ENCODE measurements at regions of chr13 and their contacts with region 1.

Region 1: DNA sequence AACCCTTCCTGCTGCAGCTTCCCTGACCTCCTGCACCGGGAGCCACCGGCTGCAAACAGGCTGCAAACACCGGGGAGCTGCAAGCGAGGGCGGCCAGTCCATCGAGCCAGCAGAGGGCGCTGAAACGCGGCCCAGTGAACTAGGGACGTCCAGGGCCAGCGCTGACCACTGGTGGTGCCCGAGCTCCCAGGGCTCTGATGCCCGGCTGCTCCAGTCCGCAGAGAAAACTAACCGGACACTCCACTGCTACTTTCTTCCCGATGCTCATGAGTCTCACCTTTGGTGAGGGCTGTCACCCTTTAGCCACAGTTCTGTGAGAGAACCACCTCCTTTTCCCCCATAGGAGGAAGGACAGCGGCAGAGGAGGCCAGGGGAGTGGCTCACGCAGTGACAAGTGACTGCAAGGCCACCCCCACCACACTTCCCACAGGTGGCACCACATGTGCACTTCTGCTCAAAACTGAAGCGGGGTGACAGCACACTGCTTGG is 82.8 kb upstream of the MTIF3 start:
- DNase-seq: peak; percentile 79 to 92 (median 86)
- ATAC-seq: peak; percentile 79 to 98 (median 98)
- H3K4me3 ChIP-seq: peak overlapping the region in 9 of 12 donors; percentile 14 to 48 (median 37)
- H3K27ac ChIP-seq: no peak overlapping the region
- H3K4me1 ChIP-seq: peaks cover 0 to 8% (median 0%) of the 10 kb centered on the region in 12 donors
- H3K27me3 ChIP-seq: no peaks in the 10 kb centered on the region
- CTCF ChIP-seq: peak; percentile 86 to 97 (median 94)
- POLR2A ChIP-seq: no peak

Region 2: DNA sequence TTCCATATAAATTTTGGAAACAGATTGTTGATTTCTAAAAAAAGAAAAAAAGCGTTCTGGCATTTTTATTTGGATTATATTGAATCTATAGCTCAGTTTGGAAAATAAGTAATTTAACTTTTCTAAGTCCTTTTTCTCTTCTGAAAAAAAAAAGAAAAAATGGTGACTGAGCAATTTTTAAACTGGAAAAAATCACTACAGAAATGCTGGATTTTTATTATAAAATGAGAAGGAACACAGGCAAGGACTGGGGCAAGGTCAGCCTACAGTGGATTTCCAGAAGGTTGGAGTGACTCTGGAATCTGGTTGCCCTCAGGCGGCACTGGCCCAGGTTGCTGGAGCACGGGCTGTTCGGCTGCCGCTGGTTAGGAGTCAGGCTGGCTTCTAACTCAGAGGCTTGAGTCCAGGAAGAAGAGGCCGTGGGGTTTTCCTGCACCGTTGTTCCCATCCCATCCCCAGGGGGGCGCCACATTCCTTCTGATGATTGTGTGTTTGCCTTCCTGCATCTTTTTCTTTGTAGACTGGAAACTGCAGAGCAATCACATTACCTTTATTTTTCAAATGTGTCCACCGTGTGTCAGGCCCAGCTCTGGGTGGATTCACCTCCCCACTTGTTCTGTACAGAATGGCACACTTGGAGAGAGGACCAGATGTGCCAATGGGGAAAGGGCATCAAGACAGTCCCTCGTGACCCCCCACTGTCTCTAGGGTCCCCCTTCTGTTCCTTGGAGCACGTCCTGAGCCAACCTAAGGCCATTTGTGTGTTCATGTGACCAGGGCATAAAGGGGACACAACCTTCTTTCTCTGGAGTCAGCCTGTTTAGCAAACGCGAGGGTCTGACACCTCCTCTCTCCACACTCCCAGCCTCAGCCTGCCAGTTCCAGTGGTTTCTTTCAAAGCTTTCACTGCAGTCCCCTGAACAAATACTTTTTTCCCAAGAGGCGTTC is 153.2 kb before region 1 on chr13:
- intact Hi-C with region 1: loop called in 8 of 10 experiments (anchors 5 to 10 kb)
- DNase-seq: peak in 3 of 5 donors; percentile 20 to 49 (median 41)
- ATAC-seq: peak in 3 of 4 donors; percentile 33 to 68 (median 34)
- H3K4me3 ChIP-seq: no peak overlapping the region
- H3K27ac ChIP-seq: no peak overlapping the region
- H3K4me1 ChIP-seq: peaks cover 0 to 5% (median 0%) of the 10 kb centered on the region in 12 donors
- H3K27me3 ChIP-seq: peaks cover 0 to 19% (median 0%) of the 10 kb centered on the region in 9 donors
- CTCF ChIP-seq: peak; percentile 22 to 63 (median 49)
- POLR2A ChIP-seq: no peak

Region 3: GRCh38 chr13:27415116-27415515 is 118.1 kb before region 1 on chr13:
- intact Hi-C with region 1: loop called in 1 of 10 experiments (anchors 10 kb)
- DNase-seq: no peak
- ATAC-seq: peak; percentile 62 to 86 (median 69)
- H3K4me3 ChIP-seq: no peak overlapping the region
- H3K27ac ChIP-seq: peak overlapping the region in 1 of 12 donors; percentile 11
- H3K4me1 ChIP-seq: peaks cover 0 to 15% (median 7%) of the 10 kb centered on the region in 12 donors
- H3K27me3 ChIP-seq: peaks cover 0 to 4% (median 0%) of the 10 kb centered on the region in 9 donors
- CTCF ChIP-seq: no peak
- POLR2A ChIP-seq: no peak

Region 4: GRCh38 chr13:27665333-27665732 is 132.1 kb after region 1 on chr13:
- intact Hi-C with region 1: loop called in 2 of 10 experiments (anchors 5 to 10 kb)
- DNase-seq: no peak
- ATAC-seq: no peak
- H3K4me3 ChIP-seq: no peak overlapping the region
- H3K27ac ChIP-seq: no peak overlapping the region
- H3K4me1 ChIP-seq: peaks cover 0 to 31% (median 6%) of the 10 kb centered on the region in 12 donors
- H3K27me3 ChIP-seq: no peaks in the 10 kb centered on the region
- CTCF ChIP-seq: peak in 10 of 12 donors; percentile 9 to 45 (median 23)
- POLR2A ChIP-seq: no peak

Region 5: GRCh38 chr13:27783111-27783510 is 249.9 kb after region 1 on chr13:
- intact Hi-C with region 1: loop called in 2 of 10 experiments (anchors 5 to 10 kb)
- DNase-seq: no peak
- ATAC-seq: peak in 3 of 4 donors; percentile 56 to 69 (median 65)
- H3K4me3 ChIP-seq: no peak overlapping the region
- H3K27ac ChIP-seq: no peak overlapping the region
- H3K4me1 ChIP-seq: no peaks in the 10 kb centered on the region
- H3K27me3 ChIP-seq: peaks cover under 1 to 82% (median 11%) of the 10 kb centered on the region in 9 donors
- CTCF ChIP-seq: peak in 10 of 12 donors; percentile 10 to 60 (median 38)
- POLR2A ChIP-seq: no peak

Region 6: GRCh38 chr13:27980280-27980998 is 447.2 kb after region 1 on chr13:
- intact Hi-C with region 1: loop called in 3 of 10 experiments (anchors 5 to 10 kb)
- DNase-seq: no peak
- ATAC-seq: no peak
- H3K4me3 ChIP-seq: no peak overlapping the region
- H3K27ac ChIP-seq: no peak overlapping the region
- H3K4me1 ChIP-seq: peaks cover 0 to 37% (median 11%) of the 10 kb centered on the region in 12 donors
- H3K27me3 ChIP-seq: peaks cover 67 to 99% (median 89%) of the 10 kb centered on the region in 9 donors
- CTCF ChIP-seq: no peak
- POLR2A ChIP-seq: no peak